Activated CD8-positive, alpha-beta T cell treated with anti-CD3 and anti-CD28 coated beads, Interleukin-2, amount 10 ng/mL, durations not matched to agents 7 days and 5 days (primary cell): ENCODE measurements at regions of chr11 and their contacts with region 1.

Region 1: DNA sequence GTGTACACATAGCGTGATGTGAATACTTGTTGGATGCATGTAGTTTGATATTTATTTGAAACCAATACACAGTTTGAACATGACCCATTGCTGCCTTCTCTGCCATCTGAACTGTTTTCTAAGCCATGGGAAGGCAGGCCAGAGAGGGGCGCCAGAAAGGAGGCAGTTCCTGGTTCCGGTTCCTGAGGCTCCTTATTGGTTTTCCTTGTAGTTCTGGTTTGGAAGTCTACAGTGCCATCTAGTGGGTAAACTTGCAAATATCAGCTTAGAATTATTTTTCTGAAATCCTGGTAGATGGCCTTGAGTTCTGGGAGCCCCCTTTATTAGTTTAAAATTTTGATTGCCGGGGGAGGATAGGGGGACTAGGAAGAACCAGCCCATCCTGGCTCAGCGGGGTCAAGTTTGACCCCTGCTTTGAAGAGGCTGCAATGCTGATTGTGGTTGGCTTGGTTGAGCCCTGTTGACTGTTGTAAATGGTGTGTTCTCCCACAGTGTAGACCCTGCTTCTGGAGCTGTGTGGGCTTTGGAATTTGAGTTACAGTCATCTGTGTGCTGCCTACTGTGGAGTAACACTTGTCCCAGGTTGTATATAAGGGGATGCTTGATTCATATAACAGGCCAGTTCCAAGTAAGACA is 48.4 kb downstream of the GRAMD1B start:
- DNase-seq: peak; percentile 39
- ATAC-seq: peak; percentile 47
- H3K4me3 Mint-ChIP-seq: peak overlapping the region; percentile 15
- H3K27ac Mint-ChIP-seq: peak overlapping the region; percentile 18
- H3K4me1 Mint-ChIP-seq: peaks cover 49% of the 10 kb centered on the region
- H3K27me3 Mint-ChIP-seq: no peaks in the 10 kb centered on the region

Region 2: DNA sequence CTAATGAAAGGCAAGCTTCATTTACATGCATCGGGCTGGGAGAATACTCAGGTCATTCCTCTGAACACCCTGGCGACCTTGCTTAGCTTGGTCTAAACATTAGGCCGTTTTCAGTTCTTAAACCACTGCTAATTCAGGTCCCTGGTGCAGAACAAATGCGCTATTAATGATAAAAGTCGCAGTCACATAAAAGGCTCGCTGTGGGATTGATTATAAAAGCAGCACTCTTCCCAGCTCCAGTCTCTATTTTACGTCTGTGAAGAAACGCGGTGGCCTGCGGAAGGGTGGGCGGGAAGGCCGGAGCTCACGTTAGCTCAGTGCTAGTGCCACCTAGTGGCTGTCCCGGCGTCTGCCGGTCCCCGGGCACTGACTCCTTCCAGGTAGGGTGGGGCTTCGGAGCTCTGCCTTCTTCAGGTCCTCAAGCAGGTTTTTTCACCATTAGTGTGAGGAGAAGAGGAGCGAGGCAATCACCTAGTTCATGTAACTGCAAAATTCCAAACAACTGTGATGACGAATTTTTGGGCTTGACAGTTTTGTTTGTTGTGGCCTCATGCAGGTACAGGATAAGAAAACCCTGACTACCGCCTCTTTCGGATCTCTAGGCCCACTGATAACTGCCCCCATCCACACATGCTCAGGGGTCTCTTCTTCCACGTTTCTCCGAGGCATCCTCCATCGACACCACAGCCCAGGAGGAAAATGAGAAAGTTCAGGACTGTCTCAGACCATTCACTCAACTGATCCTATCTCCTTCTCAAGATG is 216.9 kb before region 1 on chr11:
- CTCF ChIA-PET with region 1: interaction called, 19 read pairs
- POLR2A ChIA-PET with region 1: no interaction called
- DNase-seq: peak; percentile 79
- ATAC-seq: peak; percentile 93
- H3K4me3 Mint-ChIP-seq: no peak overlapping the region
- H3K27ac Mint-ChIP-seq: no peak overlapping the region
- H3K4me1 Mint-ChIP-seq: peaks cover 27% of the 10 kb centered on the region
- H3K27me3 Mint-ChIP-seq: peaks cover 28% of the 10 kb centered on the region

Region 3: GRCh38 chr11:123357961-123358841 is 120.3 kb before region 1 on chr11:
- CTCF ChIA-PET with region 1: interaction called, 19 read pairs
- POLR2A ChIA-PET with region 1: no interaction called
- DNase-seq: peak; percentile 72
- ATAC-seq: peak; percentile 92
- H3K4me3 Mint-ChIP-seq: peak overlapping the region; percentile 86
- H3K27ac Mint-ChIP-seq: peak overlapping the region; percentile 91
- H3K4me1 Mint-ChIP-seq: peaks cover 47% of the 10 kb centered on the region
- H3K27me3 Mint-ChIP-seq: peaks cover 21% of the 10 kb centered on the region

Region 4: DNA sequence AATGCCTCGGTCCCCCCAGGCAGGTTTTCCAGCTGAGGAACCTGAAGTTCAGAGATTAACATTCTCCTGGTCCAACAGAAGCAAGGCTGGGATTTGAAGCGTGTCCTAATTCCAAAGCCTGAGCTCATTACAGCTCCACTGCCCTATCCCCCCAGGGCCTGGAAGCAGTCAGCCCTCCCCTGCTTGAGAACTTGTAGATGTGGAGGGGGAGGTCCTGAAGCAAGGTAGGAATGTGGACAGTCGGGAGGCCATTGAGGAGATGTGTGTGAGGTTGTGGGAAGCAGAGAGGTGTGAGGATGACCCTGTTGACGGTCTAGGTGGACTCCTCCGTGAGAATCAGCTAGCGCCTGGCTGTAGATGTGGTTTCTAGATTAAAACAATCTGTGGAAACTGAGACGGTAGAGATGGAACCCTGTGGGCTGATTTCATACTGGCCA is 40.3 kb before region 1 on chr11:
- CTCF ChIA-PET with region 1: interaction called, 18 read pairs
- POLR2A ChIA-PET with region 1: interaction called, 4 read pairs
- DNase-seq: no peak
- ATAC-seq: peak; percentile 43
- H3K4me3 Mint-ChIP-seq: peak overlapping the region; percentile 1
- H3K27ac Mint-ChIP-seq: peak overlapping the region; percentile 60
- H3K4me1 Mint-ChIP-seq: peaks cover 91% of the 10 kb centered on the region
- H3K27me3 Mint-ChIP-seq: no peaks in the 10 kb centered on the region

Region 5: GRCh38 chr11:123457187-123457770 is 21.2 kb before region 1 on chr11:
- CTCF ChIA-PET with region 1: interaction called, 21 read pairs
- POLR2A ChIA-PET with region 1: no interaction called
- DNase-seq: peak; percentile 50
- ATAC-seq: peak; percentile 73
- H3K4me3 Mint-ChIP-seq: peak overlapping the region; percentile 45
- H3K27ac Mint-ChIP-seq: peak overlapping the region; percentile 91
- H3K4me1 Mint-ChIP-seq: peaks cover 64% of the 10 kb centered on the region
- H3K27me3 Mint-ChIP-seq: no peaks in the 10 kb centered on the region

Region 6: GRCh38 chr11:123585206-123585605 is 106.7 kb after region 1 on chr11:
- CTCF ChIA-PET with region 1: no interaction called
- POLR2A ChIA-PET with region 1: no interaction called
- DNase-seq: no peak
- ATAC-seq: no peak
- H3K4me3 Mint-ChIP-seq: no peak overlapping the region
- H3K27ac Mint-ChIP-seq: peak overlapping the region; percentile 54
- H3K4me1 Mint-ChIP-seq: peaks cover 4% of the 10 kb centered on the region
- H3K27me3 Mint-ChIP-seq: no peaks in the 10 kb centered on the region